ENCODE measurements at regions of chr3 and their contacts with region 1.

Region 1: DNA sequence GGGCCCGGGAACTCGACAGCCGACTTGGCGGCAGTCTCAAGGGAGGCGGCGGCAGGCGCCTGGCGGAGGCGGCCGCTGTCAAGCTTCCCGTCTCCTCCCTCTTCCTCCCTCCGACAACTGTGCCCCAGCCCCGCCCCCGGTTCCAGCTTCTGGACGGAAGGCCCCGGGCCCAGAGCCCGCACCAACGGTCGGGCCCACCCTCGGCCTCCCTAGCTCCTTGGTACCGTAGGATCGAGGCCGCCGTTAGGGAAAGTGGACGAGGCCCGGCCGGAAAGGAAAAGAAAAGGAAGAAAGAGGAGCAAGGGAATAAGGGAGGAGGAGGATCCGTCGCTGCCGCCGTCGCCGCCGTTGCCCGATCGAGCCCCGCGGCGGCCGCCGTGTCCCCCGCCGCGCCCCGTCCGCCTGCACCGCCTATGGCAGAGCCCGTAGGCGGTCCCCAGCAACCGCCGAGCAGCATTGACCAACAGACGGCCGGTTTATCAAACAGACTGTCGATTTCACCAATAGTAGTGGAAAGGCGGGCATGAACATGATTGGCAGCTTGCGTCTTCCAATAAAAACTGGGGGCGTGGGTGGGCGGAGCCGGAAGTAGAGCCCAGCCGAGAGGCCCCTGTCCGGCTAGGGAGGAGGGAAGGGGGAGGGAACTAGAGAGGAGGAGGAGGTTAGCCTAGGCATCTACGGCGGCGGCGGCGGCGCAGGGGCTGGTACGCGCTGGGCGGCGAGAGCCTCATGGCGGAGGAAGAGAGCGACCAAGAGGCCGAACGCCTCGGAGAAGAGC is at the starts of genes CGGBP1 and ZNF654:
- DNase-seq: peak; percentile 96 to 99
- ATAC-seq: peak; percentile 95 to 99 (median 98)
- H3K4me3 ChIP-seq: peak within 1 kb of the TSS; percentile 70 to 98 (median 92)
- H3K27ac ChIP-seq: peak within 1 kb of the TSS; percentile 91 to 98 (median 98)
- H3K4me1 ChIP-seq: peaks cover 0 to 64% (median 49%) of the 10 kb centered on the region in 9 donors
- H3K27me3 ChIP-seq: no peaks in the 10 kb centered on the region
- CTCF ChIP-seq: peak in 1 of 9 donors; percentile 3
- total RNA-seq, gene CGGBP1: 38.1 to 63.0 (median 45.8) TPM
- total RNA-seq, gene ZNF654: 6.9 to 13.9 (median 10.9) TPM

Region 2: GRCh38 chr3:87742250-87742649 is 316.5 kb before region 1 on chr3:
- intact Hi-C with region 1: no loop called
- DNase-seq: no peak
- ATAC-seq: no peak
- H3K4me3 ChIP-seq: no peak overlapping the region
- H3K27ac ChIP-seq: no peak overlapping the region
- H3K4me1 ChIP-seq: no peaks in the 10 kb centered on the region
- H3K27me3 ChIP-seq: no peaks in the 10 kb centered on the region
- CTCF ChIP-seq: no peak

Region 3: GRCh38 chr3:88101142-88101541 is 42.4 kb after region 1 on chr3:
- intact Hi-C with region 1: loop called in 1 of 10 experiments (anchors 5 kb)
- DNase-seq: no peak
- ATAC-seq: no peak
- H3K4me3 ChIP-seq: no peak overlapping the region
- H3K27ac ChIP-seq: no peak overlapping the region
- H3K4me1 ChIP-seq: peaks cover 0 to 13% (median 10%) of the 10 kb centered on the region in 9 donors
- H3K27me3 ChIP-seq: no peaks in the 10 kb centered on the region
- CTCF ChIP-seq: no peak

Region 4: DNA sequence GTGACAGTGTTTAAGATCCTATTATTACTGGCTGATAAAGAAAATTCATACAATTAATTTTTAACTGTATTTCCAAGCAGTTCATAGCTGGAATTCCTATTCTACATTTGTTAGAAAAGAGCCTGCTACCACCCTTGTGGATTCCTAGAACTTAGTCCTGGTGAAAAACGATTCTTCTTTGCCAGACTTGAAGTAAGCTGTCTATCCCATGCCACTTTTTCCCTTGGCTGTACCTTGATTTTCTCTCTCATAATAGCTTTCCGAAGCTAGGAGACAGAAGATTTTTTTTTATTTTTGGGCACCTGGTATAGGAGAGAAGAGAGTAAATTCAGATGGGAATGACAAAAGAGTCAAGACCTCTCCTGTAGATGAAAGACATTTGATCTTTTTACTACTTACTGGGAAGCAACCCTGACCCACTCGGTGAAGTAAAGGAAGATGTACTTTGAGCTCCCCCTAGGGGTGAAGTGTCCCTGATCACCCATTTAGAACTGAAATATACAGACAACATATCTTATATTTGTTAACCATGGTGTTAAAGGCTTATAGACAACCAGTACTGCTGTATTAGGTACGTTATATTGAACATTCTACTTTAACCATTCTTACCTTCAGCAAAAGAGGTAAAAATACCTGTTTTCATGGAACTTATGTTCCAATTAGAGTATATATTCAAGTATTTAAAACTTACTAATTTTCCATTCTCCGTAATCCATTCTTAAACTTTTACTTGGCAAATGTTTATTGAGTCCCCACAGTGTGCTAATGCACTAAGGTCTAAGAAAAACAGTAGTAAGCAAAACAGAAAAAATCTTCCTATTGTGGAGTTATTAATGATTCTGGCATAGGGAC is 54.8 kb after region 1 on chr3:
- intact Hi-C with region 1: loop called in 5 of 10 experiments (anchors 5 to 10 kb)
- DNase-seq: peak in 1 of 2 donors; percentile 74
- ATAC-seq: peak; percentile 72 to 90 (median 82)
- H3K4me3 ChIP-seq: no peak overlapping the region
- H3K27ac ChIP-seq: no peak overlapping the region
- H3K4me1 ChIP-seq: peaks cover 0 to 18% (median 5%) of the 10 kb centered on the region in 9 donors
- H3K27me3 ChIP-seq: no peaks in the 10 kb centered on the region
- CTCF ChIP-seq: peak; percentile 51 to 89 (median 77)

Region 5: GRCh38 chr3:88149509-88150362 is 91.0 kb after region 1 on chr3 and contains the start of gene C3orf38:
- intact Hi-C with region 1: loop called in 4 of 10 experiments (anchors 2 to 10 kb)
- DNase-seq: peak; percentile 85 to 88
- ATAC-seq: peak; percentile 95 to 99 (median 98)
- H3K4me3 ChIP-seq: peak within 1 kb of the TSS; percentile 64 to 89 (median 82)
- H3K27ac ChIP-seq: peak within 1 kb of the TSS; percentile 52 to 96 (median 93)
- H3K4me1 ChIP-seq: peaks cover 0 to 44% (median 24%) of the 10 kb centered on the region in 9 donors
- H3K27me3 ChIP-seq: no peaks in the 10 kb centered on the region
- CTCF ChIP-seq: no peak
- total RNA-seq, gene C3orf38: 10.6 to 18.2 (median 13.5) TPM